ENCODE measurements at regions of chr3 and their contacts with region 1.

Region 1: DNA sequence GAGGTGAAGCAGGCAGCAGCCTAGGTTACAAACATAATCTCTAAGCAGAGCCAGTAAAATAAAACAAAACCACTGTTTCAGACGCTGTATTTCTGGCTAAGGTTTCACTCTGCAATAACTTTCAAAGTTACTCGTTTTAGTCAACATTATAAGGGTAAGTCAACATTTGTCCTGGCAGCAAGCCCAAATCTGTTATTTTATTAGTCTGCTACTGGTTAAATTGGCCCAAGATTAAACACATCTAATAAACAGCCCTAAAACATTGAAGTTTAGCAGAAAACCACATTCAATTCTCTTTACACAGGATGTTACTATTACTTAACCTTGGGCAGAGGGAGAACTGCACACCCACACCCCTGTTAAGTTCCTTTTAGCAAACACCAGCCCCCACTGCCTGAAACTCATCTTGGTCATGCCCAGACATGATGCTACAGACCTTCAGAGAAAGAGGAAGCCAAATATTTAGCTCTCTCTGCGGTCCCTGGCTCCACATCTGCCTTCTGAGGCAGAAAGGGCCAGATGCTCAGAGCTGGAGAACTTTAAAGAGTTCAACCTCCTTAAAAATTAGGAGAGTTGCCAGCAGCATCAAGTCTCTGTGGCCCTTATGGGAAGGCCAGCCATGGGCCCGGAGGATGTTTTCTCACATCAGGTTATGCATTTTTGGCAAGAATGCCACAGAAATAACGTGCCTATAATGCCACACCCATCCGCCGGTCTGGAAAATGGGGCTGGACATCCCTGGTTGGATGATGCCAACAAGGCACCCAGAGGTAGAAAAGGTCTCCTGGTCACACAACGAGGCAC is 17.9 kb downstream of the ARHGEF3 start:
- DNase-seq: peak; percentile 93
- ATAC-seq: peak; percentile 92
- H3K4me3 ChIP-seq: peak overlapping the region; percentile 30; the same call in 1 of the 2 replicates
- H3K27ac ChIP-seq: peak overlapping the region; percentile 94
- H3K4me1 ChIP-seq: peaks cover 67% of the 10 kb centered on the region
- H3K27me3 ChIP-seq: no peaks in the 10 kb centered on the region
- CTCF ChIP-seq: no peak
- EP300 ChIP-seq: peak; percentile 76 to 84
- POLR2A ChIP-seq: peak; percentile 45; the same call in 1 of the 2 replicates
- RAD21 ChIP-seq: peak; percentile 25; the same call in 1 of the 2 replicates

Region 2: DNA sequence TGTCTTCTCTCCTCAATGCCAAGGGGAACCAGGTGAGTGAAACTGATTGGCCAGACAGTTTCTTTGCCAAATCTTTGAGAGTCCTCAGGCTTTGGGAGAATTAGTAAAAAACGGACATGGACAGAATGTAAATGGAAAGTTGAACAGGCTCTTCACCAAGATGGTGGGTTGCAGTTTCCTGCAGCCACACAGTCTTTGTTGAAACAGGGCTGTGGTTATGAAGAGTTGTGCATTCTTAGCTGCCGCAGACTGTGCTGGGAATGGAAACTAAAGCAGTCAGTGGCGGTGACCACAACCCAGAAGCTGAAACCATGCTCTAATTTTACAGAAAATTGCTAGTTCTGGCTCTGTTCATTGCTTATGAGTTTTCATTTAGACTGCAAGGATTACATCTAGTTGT is 58.7 kb before region 1 on chr3:
- CTCF ChIA-PET with region 1: interaction called, 12 read pairs
- POLR2A ChIA-PET with region 1: interaction called, 10 read pairs
- RAD21 ChIA-PET with region 1: interaction called, 38 read pairs
- SMC1A ChIA-PET with region 1: interaction called, 46 read pairs
- in situ Hi-C with region 1: no loop called
- intact Hi-C with region 1: no loop called
- DNase-seq: peak; percentile 87
- ATAC-seq: peak; percentile 95
- H3K4me3 ChIP-seq: peak overlapping the region; percentile 34
- H3K27ac ChIP-seq: peak overlapping the region; percentile 70
- H3K4me1 ChIP-seq: peaks cover 26% of the 10 kb centered on the region
- H3K27me3 ChIP-seq: no peaks in the 10 kb centered on the region
- CTCF ChIP-seq: no peak
- EP300 ChIP-seq: peak in 1 of 2 experiments; percentile 78; a peak in 1 of 4 replicates
- POLR2A ChIP-seq: no peak
- RAD21 ChIP-seq: peak; percentile 15; the same call in 1 of the 2 replicates

Region 3: GRCh38 chr3:56769116-56769707 is 14.6 kb before region 1 on chr3:
- CTCF ChIA-PET with region 1: interaction called, 8 read pairs
- POLR2A ChIA-PET with region 1: interaction called, 9 read pairs
- RAD21 ChIA-PET with region 1: interaction called, 4 read pairs
- SMC1A ChIA-PET with region 1: interaction called, 93 read pairs
- in situ Hi-C with region 1: no loop called
- intact Hi-C with region 1: loop called (anchors 1 kb)
- DNase-seq: no peak
- ATAC-seq: no peak
- H3K4me3 ChIP-seq: no peak overlapping the region
- H3K27ac ChIP-seq: no peak overlapping the region
- H3K4me1 ChIP-seq: peaks cover 7% of the 10 kb centered on the region
- H3K27me3 ChIP-seq: no peaks in the 10 kb centered on the region
- CTCF ChIP-seq: no peak
- EP300 ChIP-seq: no peak
- POLR2A ChIP-seq: no peak
- RAD21 ChIP-seq: no peak

Region 4: DNA sequence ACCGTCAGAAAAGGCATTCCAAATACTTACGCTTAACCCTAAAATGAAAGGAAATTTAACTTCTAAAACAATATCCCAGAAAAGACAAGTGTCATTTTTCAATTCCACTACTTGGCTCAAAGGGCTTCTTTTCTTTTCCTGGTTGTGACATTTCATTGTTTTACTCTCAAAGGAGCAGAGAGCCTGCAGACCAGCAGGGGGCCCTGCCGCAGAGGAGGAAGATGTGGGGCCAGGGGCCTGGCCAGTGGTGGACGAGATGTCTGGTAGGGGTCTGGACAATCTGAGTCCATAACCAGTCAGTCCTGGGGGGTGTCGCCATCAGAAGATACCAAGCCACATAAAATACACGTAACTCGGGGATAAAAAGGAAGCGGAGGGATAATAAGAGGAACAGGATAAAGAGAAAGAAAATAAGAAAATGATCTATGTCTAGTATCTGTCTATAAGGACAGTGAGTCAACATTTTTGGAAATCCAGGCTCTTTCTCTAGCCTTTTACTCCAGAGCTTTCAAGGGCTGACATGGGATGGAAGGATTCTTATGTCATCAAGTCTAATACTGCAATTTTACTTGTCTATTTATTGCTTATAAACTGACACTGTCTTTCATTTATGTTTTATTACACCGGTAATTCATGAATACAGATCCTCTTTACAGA is 72.1 kb after region 1 on chr3:
- CTCF ChIA-PET with region 1: no interaction called
- POLR2A ChIA-PET with region 1: no interaction called
- RAD21 ChIA-PET with region 1: no interaction called
- SMC1A ChIA-PET with region 1: no interaction called
- in situ Hi-C with region 1: no loop called
- intact Hi-C with region 1: no loop called
- DNase-seq: no peak
- ATAC-seq: peak; percentile 90
- H3K4me3 ChIP-seq: 0 out of 2 replicates have a peak overlapping the region, but pooled peaks have one; percentile 20
- H3K27ac ChIP-seq: no peak overlapping the region
- H3K4me1 ChIP-seq: no peaks in the 10 kb centered on the region
- H3K27me3 ChIP-seq: no peaks in the 10 kb centered on the region
- CTCF ChIP-seq: peak; percentile 63 to 86 (median 79)
- EP300 ChIP-seq: no peak
- POLR2A ChIP-seq: no peak
- RAD21 ChIP-seq: peak; percentile 85

Measured in GM12878 (cell line).